Activated B cell treated with CpG ODN at 0.5 μM for 24 hours (primary cell): ENCODE measurements at regions of chr9 and their contacts with region 1.

Region 1: GRCh38 chr9:90189306-90189705 is 453.3 kb downstream of the DIRAS2 start:
- DNase-seq: no peak
- ATAC-seq: peak; percentile 99
- H3K4me3 Mint-ChIP-seq: peak overlapping the region; percentile 74
- H3K27ac Mint-ChIP-seq: peak overlapping the region; percentile 80
- H3K4me1 Mint-ChIP-seq: peaks cover 58% of the 10 kb centered on the region
- H3K27me3 Mint-ChIP-seq: no peaks in the 10 kb centered on the region
- CTCF ChIP-seq: no peak

Region 2: DNA sequence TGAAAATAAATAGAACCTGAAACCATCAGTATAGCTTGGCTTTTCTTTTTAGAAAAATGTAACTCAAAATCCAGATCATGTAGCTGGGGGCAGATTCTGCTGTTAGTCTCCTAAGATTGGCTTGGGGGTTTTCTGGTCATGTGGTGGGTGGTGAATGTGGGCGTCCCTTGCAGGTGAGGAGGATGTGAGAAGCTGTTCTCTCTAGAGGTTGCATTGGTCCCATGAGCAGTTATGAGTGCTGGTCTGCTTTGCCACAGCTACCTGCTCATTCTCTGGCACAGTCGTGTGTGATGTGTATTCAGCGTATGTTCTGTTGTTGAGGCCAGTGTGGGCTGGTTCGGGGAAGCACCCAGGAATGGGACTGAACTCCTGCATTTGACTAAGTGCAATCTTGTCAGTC is 13.4 kb before region 1 on chr9:
- CTCF ChIA-PET with region 1: no interaction called
- POLR2A ChIA-PET with region 1: no interaction called
- intact Hi-C with region 1: loop called (anchors 2 kb)
- DNase-seq: no peak
- ATAC-seq: peak; percentile 54
- H3K4me3 Mint-ChIP-seq: no peak overlapping the region
- H3K27ac Mint-ChIP-seq: no peak overlapping the region
- H3K4me1 Mint-ChIP-seq: peaks cover 49% of the 10 kb centered on the region
- H3K27me3 Mint-ChIP-seq: no peaks in the 10 kb centered on the region
- CTCF ChIP-seq: no peak

Region 3: DNA sequence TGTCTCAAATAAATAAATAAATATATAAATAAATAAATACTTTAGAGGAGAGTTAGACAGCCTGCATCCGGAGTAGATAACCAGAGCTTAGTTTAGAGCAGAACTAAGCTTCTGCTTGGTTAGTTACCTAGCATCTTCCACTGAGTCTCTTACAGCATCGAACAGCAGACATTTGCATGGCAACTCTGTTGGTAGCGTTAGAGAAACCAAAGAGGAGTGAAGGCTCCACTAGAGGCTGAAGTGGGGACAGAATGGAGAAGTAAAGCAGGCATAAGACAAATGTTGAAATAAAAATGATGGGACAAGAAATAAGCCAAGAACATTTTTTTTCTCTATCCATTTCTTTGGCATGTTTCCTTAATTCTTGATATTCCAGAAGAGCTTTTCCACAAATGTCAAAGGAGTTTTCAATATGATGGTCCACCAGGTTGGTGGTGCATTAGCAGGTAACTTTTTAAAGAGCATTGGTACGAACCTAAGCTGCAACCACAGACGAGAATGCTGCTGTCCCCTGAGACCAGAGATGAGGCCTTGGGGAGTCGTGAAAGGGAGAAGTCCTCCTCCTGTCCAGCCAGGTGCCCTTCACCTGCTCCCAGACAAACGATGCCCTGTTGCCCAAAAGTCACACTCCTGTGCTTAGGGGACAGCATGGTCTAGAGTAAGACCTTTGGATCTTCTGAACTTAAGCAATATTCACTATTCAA is 15.0 kb after region 1 on chr9:
- CTCF ChIA-PET with region 1: no interaction called
- POLR2A ChIA-PET with region 1: no interaction called
- intact Hi-C with region 1: loop called (anchors 2 kb)
- DNase-seq: no peak
- ATAC-seq: peak; percentile 89
- H3K4me3 Mint-ChIP-seq: peak overlapping the region; percentile 55
- H3K27ac Mint-ChIP-seq: peak overlapping the region; percentile 59
- H3K4me1 Mint-ChIP-seq: peaks cover 18% of the 10 kb centered on the region
- H3K27me3 Mint-ChIP-seq: no peaks in the 10 kb centered on the region
- CTCF ChIP-seq: no peak